Naive thymus-derived CD4-positive, alpha-beta T cell (primary cell): ENCODE measurements at regions of chr10 and their contacts with region 1.

Region 1: DNA sequence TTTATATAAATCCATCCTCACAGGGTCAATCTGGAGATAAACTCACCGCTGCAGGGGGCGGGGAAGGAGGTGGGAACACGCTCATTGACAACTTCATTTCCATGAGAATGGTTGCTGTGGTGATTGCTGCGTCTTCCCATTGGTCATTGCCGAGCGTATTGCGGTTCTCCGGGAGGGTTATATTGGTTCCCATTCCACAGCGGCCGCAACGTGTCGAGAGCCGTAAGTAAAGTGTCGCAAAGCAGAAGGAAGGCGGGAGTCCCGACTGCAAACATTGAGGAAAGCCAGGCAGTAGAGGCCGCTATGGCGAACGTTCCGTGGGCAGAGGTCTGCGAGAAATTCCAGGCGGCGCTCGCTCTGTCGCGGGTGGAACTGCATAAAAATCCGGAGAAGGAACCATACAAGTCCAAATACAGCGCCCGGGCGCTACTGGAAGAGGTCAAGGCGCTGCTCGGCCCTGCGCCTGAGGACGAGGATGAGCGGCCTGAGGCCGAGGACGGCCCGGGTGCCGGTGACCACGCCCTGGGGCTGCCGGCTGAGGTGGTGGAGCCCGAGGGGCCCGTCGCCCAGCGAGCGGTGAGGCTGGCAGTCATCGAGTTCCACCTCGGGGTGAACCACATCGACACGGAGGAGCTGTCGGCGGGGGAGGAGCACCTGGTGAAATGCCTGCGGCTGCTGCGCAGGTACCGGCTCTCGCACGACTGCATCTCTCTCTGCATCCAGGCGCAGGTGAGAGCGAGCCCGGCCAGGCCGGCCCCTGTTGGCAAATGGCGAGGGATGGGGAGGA is at the start of gene KIFBP:
- DNase-seq: peak; percentile 50 to 84 (median 82)
- ATAC-seq: peak; percentile 93
- H3K4me3 ChIP-seq: peak within 1 kb of the TSS; percentile 89
- H3K4me3 Mint-ChIP-seq: peak within 1 kb of the TSS; percentile 94 to 100 (median 99)
- H3K27ac ChIP-seq: peak within 1 kb of the TSS; percentile 82
- H3K27ac Mint-ChIP-seq: peak within 1 kb of the TSS; percentile 82 to 99 (median 94)
- H3K4me1 ChIP-seq: peaks cover 15 to 20% of the 10 kb centered on the region in 2 donors
- H3K4me1 Mint-ChIP-seq: peaks cover 31 to 65% (median 56%) of the 10 kb centered on the region in 7 donors
- H3K27me3 ChIP-seq: no peaks in the 10 kb centered on the region
- H3K27me3 Mint-ChIP-seq: peaks cover 0 to 2% (median 0%) of the 10 kb centered on the region in 5 donors
- total RNA-seq, gene KIFBP: 4.5 to 18.1 (median 14.0) TPM

Region 2: DNA sequence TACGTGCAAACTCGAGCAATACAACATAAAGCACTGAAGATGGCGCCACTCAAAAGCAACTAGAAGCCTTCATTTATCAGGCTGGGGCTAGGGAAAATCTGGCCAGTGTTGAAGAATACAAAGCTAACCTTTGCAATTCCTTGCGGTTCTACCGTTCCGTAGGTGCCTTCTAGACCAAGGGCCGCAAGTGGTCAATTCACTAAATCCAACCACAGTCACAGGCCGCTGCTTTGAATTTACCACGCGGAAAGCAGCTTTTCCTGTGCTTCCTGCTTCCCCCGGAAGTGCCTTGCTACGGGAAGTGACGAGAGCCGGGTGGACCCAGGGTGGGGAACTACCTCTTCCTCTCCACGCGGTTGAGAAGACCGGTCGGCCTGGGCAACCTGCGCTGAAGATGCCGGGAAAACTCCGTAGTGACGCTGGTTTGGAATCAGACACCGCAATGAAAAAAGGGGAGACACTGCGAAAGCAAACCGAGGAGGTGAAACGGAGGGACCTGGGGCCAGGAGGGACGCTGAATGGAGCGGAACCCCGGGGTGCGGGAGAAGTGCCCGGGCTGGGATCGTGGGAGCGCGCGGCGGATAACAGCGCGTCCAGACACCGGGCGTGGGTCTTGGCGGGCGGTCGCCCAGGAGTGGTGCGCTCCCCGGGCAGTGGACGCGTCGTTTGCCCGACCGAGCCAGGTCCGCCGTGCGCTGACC is 32.7 kb before region 1 on chr10 and contains the start of gene DDX21:
- CTCF ChIA-PET with region 1: no interaction called
- POLR2A ChIA-PET with region 1: interaction called, 6 read pairs
- intact Hi-C with region 1: loop called (anchors 1 kb)
- DNase-seq: peak; percentile 70 to 94 (median 89)
- ATAC-seq: peak; percentile 89
- H3K4me3 ChIP-seq: peak within 1 kb of the TSS; percentile 71
- H3K4me3 Mint-ChIP-seq: peak within 1 kb of the TSS; percentile 91 to 100 (median 98)
- H3K27ac ChIP-seq: peak within 1 kb of the TSS; percentile 97
- H3K27ac Mint-ChIP-seq: peak within 1 kb of the TSS; percentile 96 to 100 (median 99)
- H3K4me1 ChIP-seq: peaks cover 7 to 11% of the 10 kb centered on the region in 2 donors
- H3K4me1 Mint-ChIP-seq: peaks cover 15 to 53% (median 33%) of the 10 kb centered on the region in 7 donors
- H3K27me3 ChIP-seq: no peaks in the 10 kb centered on the region
- H3K27me3 Mint-ChIP-seq: no peaks in the 10 kb centered on the region
- total RNA-seq, gene DDX21: 43.5 to 101 (median 86.7) TPM

Region 3: DNA sequence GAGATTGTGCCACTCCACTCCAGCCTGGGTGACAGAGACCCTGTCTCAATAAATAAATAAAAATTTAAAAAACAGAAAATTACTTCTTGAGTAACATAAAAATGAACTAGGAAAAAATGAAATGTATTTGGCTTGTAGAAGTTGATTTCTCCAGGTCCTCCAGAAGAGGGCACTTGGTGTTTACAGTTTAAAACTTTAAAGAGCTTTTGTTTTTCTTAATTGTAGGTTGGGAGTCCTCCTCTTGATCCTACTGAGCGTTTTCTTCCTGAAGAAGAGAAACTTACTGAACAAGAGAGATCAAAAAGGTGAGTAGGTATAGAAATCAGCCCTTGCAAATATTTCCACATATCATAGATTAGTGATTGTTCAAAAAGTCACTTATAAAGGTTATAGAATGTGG is 16.1 kb after region 1 on chr10:
- CTCF ChIA-PET with region 1: interaction called, 10 read pairs
- POLR2A ChIA-PET with region 1: no interaction called
- intact Hi-C with region 1: loop called in 1 of 2 experiments (anchors 1 kb)
- DNase-seq: peak in 7 of 9 donors; percentile 42 to 72 (median 60)
- ATAC-seq: peak; percentile 74
- H3K4me3 ChIP-seq: no peak overlapping the region
- H3K4me3 Mint-ChIP-seq: no peak overlapping the region
- H3K27ac ChIP-seq: no peak overlapping the region
- H3K27ac Mint-ChIP-seq: peak overlapping the region in 4 of 9 donors; percentile 23 to 43 (median 28)
- H3K4me1 ChIP-seq: peaks cover 0 to 3% of the 10 kb centered on the region in 2 donors
- H3K4me1 Mint-ChIP-seq: peaks cover 0 to 11% (median 5%) of the 10 kb centered on the region in 7 donors
- H3K27me3 ChIP-seq: no peaks in the 10 kb centered on the region
- H3K27me3 Mint-ChIP-seq: no peaks in the 10 kb centered on the region

Region 4: DNA sequence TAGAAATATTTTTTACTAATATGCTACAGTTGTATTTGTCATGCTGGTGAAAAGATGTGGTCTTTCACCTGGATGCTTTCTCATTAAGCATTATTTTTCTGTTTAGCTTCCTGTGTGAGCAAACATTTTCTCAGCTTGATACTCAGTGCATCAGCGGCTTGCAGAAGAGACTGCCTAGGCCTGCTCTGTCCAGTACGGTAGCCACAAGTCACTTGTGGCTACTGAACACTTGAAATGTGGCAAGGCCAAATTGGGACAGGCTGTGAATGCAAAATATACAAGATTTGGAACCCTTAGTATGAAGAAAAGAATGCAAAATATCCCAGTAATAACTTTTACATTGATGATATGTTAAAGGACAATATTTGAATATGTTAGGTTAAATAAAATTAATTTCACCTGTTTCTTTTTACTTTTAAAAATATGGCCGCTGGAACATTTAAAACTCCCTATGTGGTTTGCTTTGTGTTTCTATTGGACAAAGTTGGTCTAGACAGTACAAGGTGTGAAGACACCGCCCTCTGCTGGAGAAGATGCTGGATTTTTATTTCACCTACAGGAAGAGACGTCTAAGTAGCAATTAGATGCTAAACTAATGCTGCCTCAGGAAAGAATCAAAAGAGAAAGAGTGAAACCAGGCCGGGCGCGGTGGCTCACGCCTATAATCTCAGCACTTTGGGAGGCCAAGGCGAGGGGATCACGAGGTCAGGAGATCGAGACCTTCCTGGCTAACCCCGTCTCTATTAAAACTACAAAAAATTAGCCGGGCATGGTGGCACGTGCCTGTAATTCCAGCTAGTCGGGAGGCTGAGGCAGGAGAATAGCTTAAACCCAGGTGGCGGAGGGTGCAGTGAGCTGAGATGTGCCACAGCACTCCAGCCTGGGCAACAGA is 104.5 kb after region 1 on chr10:
- CTCF ChIA-PET with region 1: interaction called, 11 read pairs
- POLR2A ChIA-PET with region 1: interaction called, 6 read pairs
- intact Hi-C with region 1: loop called (anchors 1 kb)
- DNase-seq: peak; percentile 43 to 89 (median 85)
- ATAC-seq: peak; percentile 61
- H3K4me3 ChIP-seq: peak overlapping the region; percentile 19
- H3K4me3 Mint-ChIP-seq: peak overlapping the region in 7 of 10 donors; percentile 4 to 36 (median 15)
- H3K27ac ChIP-seq: peak overlapping the region; percentile 54
- H3K27ac Mint-ChIP-seq: peak overlapping the region; percentile 23 to 90 (median 63)
- H3K4me1 ChIP-seq: peaks cover 28 to 37% of the 10 kb centered on the region in 2 donors
- H3K4me1 Mint-ChIP-seq: peaks cover 23 to 64% (median 55%) of the 10 kb centered on the region in 7 donors
- H3K27me3 ChIP-seq: no peaks in the 10 kb centered on the region
- H3K27me3 Mint-ChIP-seq: no peaks in the 10 kb centered on the region

Region 5: DNA sequence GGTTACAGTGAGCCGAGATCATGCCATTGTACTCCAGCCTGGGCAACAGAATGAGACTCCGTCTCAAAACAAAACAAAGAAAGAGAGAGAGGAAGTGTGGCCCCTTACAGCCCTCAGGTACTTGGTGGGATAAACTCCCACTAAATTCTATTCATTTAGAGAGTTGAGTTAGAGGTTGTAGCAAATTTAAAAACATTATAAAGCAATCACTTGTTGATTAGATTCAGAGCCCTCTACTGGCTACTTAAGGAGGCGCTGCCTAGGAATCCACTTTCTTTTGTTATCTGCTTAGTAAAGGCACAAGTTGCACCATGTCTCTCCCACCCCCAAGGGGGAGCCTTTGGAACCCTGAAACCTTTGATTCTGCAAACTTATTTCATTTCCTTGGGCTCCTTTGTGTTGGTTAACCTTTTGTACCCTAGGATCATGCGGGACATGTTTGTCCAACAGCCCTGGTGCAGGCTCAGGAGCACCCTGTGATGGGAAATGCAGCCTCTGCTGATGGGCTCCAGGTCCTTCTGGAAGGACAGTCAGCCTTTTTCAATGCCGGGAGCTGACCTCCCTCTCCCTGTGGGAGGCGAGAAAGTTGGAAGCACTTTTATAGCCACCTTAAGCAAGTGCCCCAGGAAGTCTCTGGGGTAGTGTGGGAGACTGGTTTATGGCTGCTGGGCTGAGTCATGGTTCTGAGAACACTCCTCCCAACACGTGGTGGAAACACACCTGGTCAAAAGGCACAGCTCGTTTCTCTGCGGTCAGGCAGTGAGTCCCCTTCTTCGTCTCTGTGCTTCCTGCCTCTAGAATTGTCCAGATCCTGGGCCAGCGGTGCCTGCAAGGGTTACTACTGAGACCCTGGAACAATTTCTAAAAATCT is 233.7 kb after region 1 on chr10:
- CTCF ChIA-PET with region 1: no interaction called
- POLR2A ChIA-PET with region 1: no interaction called
- intact Hi-C with region 1: loop called in 1 of 2 experiments (anchors 2 kb)
- DNase-seq: peak in 8 of 9 donors; percentile 21 to 80 (median 41)
- ATAC-seq: peak; percentile 88
- H3K4me3 ChIP-seq: peak overlapping the region; percentile 34
- H3K4me3 Mint-ChIP-seq: peak overlapping the region in 4 of 10 donors; percentile 17 to 83 (median 50)
- H3K27ac ChIP-seq: no peak overlapping the region
- H3K27ac Mint-ChIP-seq: peak overlapping the region in 4 of 9 donors; percentile 18 to 91 (median 56)
- H3K4me1 ChIP-seq: peaks cover 11 to 37% of the 10 kb centered on the region in 2 donors
- H3K4me1 Mint-ChIP-seq: peaks cover 0 to 47% (median 15%) of the 10 kb centered on the region in 7 donors
- H3K27me3 ChIP-seq: no peaks in the 10 kb centered on the region
- H3K27me3 Mint-ChIP-seq: no peaks in the 10 kb centered on the region